ENCODE measurements at regions of chr20 and their contacts with region 1.

Region 1: DNA sequence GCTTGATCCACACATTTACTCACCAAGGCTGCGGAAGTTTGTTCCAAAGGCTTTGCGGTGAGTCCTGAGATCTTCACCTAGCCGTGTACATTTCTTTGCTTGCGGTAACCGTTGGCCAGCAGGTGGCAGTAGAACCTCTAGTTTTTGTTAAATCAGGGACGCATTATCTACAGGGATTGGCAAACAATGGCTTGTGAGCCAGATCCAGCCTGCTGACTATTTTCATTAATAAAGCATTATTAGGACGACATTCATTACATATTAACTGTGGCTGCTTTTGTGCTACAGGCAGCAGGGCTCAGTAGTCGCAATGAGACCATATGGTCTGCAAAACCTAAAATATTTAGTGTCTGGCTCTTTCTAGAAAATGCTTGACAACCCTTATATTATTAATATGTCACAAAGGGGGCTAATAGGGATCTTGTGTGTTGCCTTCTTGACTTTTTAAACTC is 174.1 kb downstream of the DOK5 start:
- DNase-seq: peak; percentile 85
- ATAC-seq: no peak
- H3K4me3 Mint-ChIP-seq: no peak overlapping the region
- H3K27ac Mint-ChIP-seq: no peak overlapping the region
- H3K4me1 Mint-ChIP-seq: no peaks in the 10 kb centered on the region
- H3K27me3 Mint-ChIP-seq: peaks cover 9% of the 10 kb centered on the region
- CTCF ChIP-seq: peak; percentile 73

Region 2: GRCh38 chr20:54093423-54094267 is 555.9 kb before region 1 on chr20:
- CTCF ChIA-PET with region 1: interaction called, 7 read pairs
- POLR2A ChIA-PET with region 1: no interaction called
- intact Hi-C with region 1: loop called (anchors 5 kb)
- DNase-seq: no peak
- ATAC-seq: no peak
- H3K4me3 Mint-ChIP-seq: no peak overlapping the region
- H3K27ac Mint-ChIP-seq: no peak overlapping the region
- H3K4me1 Mint-ChIP-seq: no peaks in the 10 kb centered on the region
- H3K27me3 Mint-ChIP-seq: no peaks in the 10 kb centered on the region
- CTCF ChIP-seq: no peak

Region 3: DNA sequence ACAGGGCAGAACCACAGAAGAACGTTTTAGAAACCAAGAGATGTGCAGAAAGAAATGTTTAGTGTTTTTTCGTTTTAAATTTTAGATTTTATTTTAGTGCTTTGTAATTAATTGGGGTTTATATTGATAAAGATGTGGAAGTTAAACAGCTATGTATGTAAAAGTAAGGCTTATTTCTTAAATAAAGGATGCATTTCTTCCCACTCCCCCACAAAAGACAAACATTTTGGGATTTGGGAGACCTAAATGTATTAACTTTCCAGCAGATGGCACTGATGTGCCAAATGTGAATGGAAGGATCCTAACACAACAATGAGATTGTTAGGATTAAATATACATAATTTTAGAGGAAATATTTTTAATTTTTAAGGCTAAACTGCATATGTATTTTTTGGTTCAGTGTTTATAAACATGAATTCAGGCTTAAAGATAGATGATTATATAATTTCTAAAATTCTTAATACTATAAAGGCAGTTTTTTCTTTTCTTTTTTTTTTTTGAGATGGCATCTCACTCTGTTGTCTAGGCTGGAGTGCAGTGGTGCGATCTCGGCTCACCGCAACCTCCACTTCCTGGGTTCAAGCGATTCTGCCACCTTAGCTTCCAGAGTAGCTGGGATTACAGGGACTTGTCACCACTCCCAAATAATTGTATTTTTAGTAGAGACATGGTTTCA is 429.6 kb before region 1 on chr20:
- CTCF ChIA-PET with region 1: interaction called, 7 read pairs
- POLR2A ChIA-PET with region 1: no interaction called
- intact Hi-C with region 1: loop called (anchors 5 kb)
- DNase-seq: no peak
- ATAC-seq: no peak
- H3K4me3 Mint-ChIP-seq: no peak overlapping the region
- H3K27ac Mint-ChIP-seq: no peak overlapping the region
- H3K4me1 Mint-ChIP-seq: peaks cover 23% of the 10 kb centered on the region
- H3K27me3 Mint-ChIP-seq: no peaks in the 10 kb centered on the region
- CTCF ChIP-seq: peak; percentile 41